ENCODE measurements at regions of chr20 and their contacts with region 1.

Region 1: GRCh38 chr20:62302341-62303058 is at the start of gene ADRM1:
- DNase-seq: peak; percentile 95 to 99 (median 96)
- ATAC-seq: peak; percentile 93
- H3K4me3 ChIP-seq: peak within 1 kb of the TSS; percentile 71
- H3K27ac ChIP-seq: peak within 1 kb of the TSS; percentile 93
- H3K4me1 ChIP-seq: peaks cover 14 to 71% of the 10 kb centered on the region in 2 experiments
- H3K27me3 ChIP-seq: no peaks in the 10 kb centered on the region
- CTCF ChIP-seq: peak; percentile 94 to 99 (median 96)
- EP300 ChIP-seq: 0 out of 2 replicates have a peak, but pooled peaks have one; percentile 34
- POLR2A ChIP-seq: peak; percentile 80
- RAD21 ChIP-seq: peak; percentile 19 to 40; a peak in 2 of 4 replicates
- polyA plus RNA-seq, gene ADRM1: 5.0 to 21.6 TPM

Region 2: GRCh38 chr20:62237801-62238571 is 64.5 kb before region 1 on chr20 and contains the start of gene OSBPL2:
- CTCF ChIA-PET with region 1: interaction called, 3 read pairs
- POLR2A ChIA-PET with region 1: interaction called, 3 read pairs
- in situ Hi-C with region 1: no loop called
- intact Hi-C with region 1: loop called (anchors 2 kb)
- DNase-seq: peak; percentile 99 to 100 (median 100)
- ATAC-seq: peak; percentile 98
- H3K4me3 ChIP-seq: peak within 1 kb of the TSS; percentile 68
- H3K27ac ChIP-seq: peak within 1 kb of the TSS; percentile 62; the same call in 2 of the 3 replicates
- H3K4me1 ChIP-seq: peaks cover 12 to 53% of the 10 kb centered on the region in 2 experiments; a peak in 4 of 5 replicates
- H3K27me3 ChIP-seq: no peaks in the 10 kb centered on the region
- CTCF ChIP-seq: no peak
- EP300 ChIP-seq: no peak
- POLR2A ChIP-seq: no peak
- RAD21 ChIP-seq: no peak
- polyA plus RNA-seq, gene OSBPL2: 2.5 to 3.5 TPM

Region 3: GRCh38 chr20:62368976-62369814 is 66.7 kb after region 1 on chr20:
- CTCF ChIA-PET with region 1: interaction called, 3 read pairs
- POLR2A ChIA-PET with region 1: interaction called, 3 read pairs
- in situ Hi-C with region 1: loop called (anchors 5 kb)
- intact Hi-C with region 1: loop called (anchors 5 kb)
- DNase-seq: peak; percentile 59 to 75 (median 72)
- ATAC-seq: peak; percentile 58
- H3K4me3 ChIP-seq: no peak overlapping the region
- H3K27ac ChIP-seq: no peak overlapping the region
- H3K4me1 ChIP-seq: peaks cover 50 to 91% of the 10 kb centered on the region in 2 experiments
- H3K27me3 ChIP-seq: no peaks in the 10 kb centered on the region
- CTCF ChIP-seq: peak; percentile 34 to 47 (median 36); a peak in 3 of 6 replicates
- EP300 ChIP-seq: no peak
- POLR2A ChIP-seq: no peak
- RAD21 ChIP-seq: no peak

Region 4: DNA sequence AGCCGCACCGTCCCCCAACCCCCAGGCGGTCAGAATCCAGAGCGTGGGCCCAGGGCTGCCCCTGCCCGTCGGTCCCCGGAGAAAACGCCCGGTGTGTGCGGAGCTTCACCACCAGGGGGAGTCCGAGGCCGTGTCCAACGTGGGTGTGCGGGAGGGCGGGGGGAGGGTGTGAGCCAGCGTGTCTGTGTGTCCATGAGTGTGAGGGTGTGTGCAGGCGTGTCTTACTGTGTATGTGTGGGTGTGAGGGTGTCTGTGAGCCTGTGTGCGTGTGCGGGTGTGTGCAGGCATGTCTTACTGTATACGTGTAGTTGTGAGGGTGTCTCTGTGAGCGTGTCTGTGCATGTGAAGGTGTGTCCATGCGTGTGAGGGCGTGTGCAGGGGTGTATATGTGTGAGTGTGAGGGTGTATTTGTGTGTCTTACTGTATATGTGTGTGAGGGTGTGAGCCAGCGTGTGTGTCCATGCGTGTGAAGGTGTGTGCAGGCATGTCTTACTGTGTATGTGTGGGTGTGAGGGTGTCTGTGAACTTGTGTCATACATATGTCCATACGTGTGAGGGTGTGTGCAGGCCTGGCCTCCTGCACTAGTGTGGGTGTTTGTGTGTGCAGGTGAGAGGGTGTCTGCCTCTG is 197.9 kb after region 1 on chr20:
- CTCF ChIA-PET with region 1: no interaction called
- POLR2A ChIA-PET with region 1: no interaction called
- in situ Hi-C with region 1: loop called (anchors 10 kb)
- intact Hi-C with region 1: loop called (anchors 10 kb)
- DNase-seq: peak; percentile 82 to 89 (median 86)
- ATAC-seq: peak; percentile 89
- H3K4me3 ChIP-seq: no peak overlapping the region
- H3K27ac ChIP-seq: no peak overlapping the region; the same call in 2 of the 3 replicates
- H3K4me1 ChIP-seq: peaks cover 9 to 64% of the 10 kb centered on the region in 2 experiments
- H3K27me3 ChIP-seq: no peaks in the 10 kb centered on the region; a peak in 1 of 5 replicates
- CTCF ChIP-seq: peak; percentile 88 to 92 (median 89)
- EP300 ChIP-seq: no peak
- POLR2A ChIP-seq: no peak
- RAD21 ChIP-seq: peak; percentile 84 to 95